Tibial artery (tissue), 4 donors: ENCODE measurements at regions of chr6 and their contacts with region 1.

Region 1: DNA sequence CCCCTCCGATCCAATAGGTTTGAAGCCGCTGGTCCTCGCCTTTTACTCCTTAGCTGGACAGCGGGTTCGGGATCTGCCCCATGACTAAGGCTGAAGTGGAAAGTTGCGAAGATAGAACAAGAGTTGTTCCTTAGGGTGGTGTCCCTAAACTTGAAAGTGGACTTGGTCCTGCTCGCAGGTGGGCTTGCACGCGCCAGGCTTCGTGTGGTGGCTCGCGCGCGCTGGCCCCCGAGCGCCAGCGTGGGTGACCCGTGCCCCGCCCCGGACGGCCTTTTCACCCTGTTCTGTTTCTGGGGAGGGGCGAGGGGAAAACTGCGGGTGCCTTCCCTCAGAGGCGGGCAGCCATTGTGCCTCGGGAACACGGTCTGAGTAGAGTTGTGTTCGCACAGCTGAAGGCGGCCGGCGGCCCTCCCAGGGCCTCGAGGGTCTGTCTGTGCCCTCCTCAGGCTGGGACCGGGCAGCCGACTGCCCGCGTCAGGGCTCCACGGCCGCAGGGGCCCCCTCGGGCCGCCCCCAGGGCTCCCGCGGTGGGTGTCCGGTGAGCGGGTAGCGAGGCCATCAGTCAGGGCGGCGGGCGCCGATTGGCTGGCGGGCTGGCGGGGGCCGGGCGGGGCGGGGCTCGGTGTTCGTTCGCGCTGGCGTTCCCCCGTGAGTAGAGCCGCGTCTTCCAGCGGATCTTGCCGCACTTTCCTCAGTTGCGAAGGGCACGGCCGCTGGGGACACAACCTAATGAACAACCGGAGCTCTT is 33.0 kb downstream of the RREB1 start:
- DNase-seq: peak; percentile 90 to 95
- H3K4me3 ChIP-seq: peak overlapping the region; percentile 65 to 66
- H3K27ac ChIP-seq: peak overlapping the region; percentile 92 to 97
- H3K4me1 ChIP-seq: peaks cover 0 to 45% (median 25%) of the 10 kb centered on the region in 4 donors
- H3K27me3 ChIP-seq: no peaks in the 10 kb centered on the region
- CTCF ChIP-seq: no peak

Region 2: DNA sequence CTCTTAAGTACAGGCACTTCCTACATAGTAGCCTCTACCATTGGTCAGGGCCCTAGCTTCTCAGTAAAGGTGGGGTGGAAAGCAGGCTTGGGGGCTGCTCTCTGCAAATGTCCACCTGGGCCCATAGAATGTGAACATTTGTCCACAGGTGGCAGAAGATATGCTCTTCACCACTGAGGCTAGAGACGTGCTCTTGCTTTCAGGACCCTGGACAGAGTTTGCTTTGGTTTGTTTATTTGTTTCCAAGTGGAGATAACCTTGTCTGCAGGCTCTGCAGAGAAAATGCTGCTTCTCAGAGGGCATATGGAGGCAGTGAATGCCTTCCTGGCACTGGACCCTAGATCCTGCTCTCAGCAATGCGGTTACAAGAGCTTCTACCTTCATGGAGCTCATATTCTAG is 949.3 kb before region 1 on chr6:
- intact Hi-C with region 1: no loop called
- DNase-seq: no peak
- H3K4me3 ChIP-seq: no peak overlapping the region
- H3K27ac ChIP-seq: no peak overlapping the region
- H3K4me1 ChIP-seq: no peaks in the 10 kb centered on the region
- H3K27me3 ChIP-seq: no peaks in the 10 kb centered on the region
- CTCF ChIP-seq: no peak

Region 3: DNA sequence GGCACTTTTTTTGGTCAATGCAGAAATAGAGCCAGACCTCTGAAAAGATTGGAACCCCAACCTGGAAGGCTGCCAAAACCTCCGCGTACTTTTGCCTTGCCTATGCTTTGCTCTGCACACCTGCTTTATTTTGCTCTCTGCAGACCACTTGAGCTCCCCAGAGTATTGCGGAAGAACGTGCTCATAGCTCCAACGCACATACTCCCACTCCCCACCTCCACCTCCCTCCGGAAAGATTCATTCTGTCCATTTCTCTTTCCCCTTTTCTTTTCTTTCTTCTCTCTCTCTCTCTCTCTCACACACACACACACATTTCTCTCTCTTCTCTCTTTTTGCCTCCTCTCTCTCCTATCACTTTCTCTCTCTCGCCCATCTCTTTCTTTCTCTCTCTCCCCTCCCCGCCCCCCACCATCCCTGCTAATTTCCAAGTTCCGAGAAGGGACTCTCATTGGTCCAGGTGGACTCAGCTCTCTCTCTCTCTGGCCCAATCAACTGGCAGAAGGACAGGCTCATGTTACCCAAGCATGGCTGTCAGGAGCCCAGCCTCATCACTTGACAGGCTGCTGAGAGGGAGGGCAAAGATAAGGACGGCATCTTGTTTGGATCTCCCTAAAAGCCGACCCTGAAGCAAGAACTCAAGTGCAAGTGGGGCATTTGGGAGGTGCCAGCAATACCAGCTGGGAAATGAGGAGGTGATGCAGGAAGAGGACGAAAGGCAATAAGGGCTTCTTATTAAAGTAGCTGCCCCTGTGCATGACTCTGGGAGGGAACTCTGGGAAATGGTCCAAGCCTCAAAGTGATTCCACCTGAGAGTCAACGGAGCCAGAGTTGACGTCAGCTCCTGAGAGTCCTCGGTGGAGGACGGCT is 306.2 kb before region 1 on chr6:
- intact Hi-C with region 1: loop called (anchors 5 kb)
- DNase-seq: no peak
- H3K4me3 ChIP-seq: no peak overlapping the region
- H3K27ac ChIP-seq: no peak overlapping the region
- H3K4me1 ChIP-seq: no peaks in the 10 kb centered on the region
- H3K27me3 ChIP-seq: peaks cover 0 to 5% of the 10 kb centered on the region in 2 donors
- CTCF ChIP-seq: no peak

Region 4: GRCh38 chr6:7107578-7108195 is 33.1 kb before region 1 on chr6 and contains the start of gene RREB1:
- intact Hi-C with region 1: loop called (anchors 2 kb)
- DNase-seq: peak; percentile 79 to 86
- H3K4me3 ChIP-seq: peak within 1 kb of the TSS; percentile 78 to 90
- H3K27ac ChIP-seq: peak within 1 kb of the TSS; percentile 90 to 96
- H3K4me1 ChIP-seq: peaks cover 0 to 31% (median 17%) of the 10 kb centered on the region in 4 donors
- H3K27me3 ChIP-seq: no peaks in the 10 kb centered on the region
- CTCF ChIP-seq: no peak

Region 5: DNA sequence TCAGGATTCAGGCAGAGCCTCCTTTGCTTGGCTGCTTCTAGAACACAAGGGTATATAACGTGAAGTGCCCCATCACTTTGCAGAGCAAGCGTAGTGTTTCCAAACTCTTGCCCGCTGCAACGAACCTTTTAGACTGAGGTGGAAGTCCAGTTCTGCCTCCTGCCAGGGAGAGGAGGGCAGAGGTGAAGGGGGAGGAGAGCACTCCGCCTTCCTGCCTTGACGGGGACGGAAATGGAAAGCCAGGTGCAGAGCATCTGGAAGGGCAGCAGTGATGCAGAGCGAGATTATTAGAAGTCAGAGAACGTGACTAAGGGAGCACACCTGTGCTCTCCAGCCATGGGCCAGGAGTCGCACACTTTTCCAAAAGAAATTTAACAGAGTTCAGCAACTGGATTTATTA is 30.3 kb after region 1 on chr6:
- intact Hi-C with region 1: loop called (anchors 2 kb)
- DNase-seq: no peak
- H3K4me3 ChIP-seq: no peak overlapping the region
- H3K27ac ChIP-seq: peak overlapping the region; percentile 62 to 74
- H3K4me1 ChIP-seq: peaks cover 0 to 84% (median 60%) of the 10 kb centered on the region in 4 donors
- H3K27me3 ChIP-seq: no peaks in the 10 kb centered on the region
- CTCF ChIP-seq: no peak

Region 6: DNA sequence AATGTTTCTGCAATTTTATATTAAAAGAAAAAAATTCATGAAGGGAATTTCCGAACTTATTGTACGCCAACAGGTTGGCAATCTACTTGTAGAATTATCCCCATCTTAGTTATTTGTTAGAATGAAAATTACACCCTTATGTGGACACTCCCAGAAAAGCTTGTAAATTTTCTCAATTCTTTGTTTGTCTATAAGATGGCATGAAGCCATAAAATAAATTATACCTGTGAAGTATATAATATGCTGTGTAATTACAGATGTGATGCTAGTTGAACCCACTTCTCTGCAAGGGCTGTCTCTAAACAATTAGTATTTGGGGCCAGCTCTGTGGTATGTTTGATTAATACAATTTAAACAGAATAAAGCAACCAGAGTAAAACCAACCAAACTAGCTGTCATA is 348.6 kb after region 1 on chr6:
- intact Hi-C with region 1: no loop called
- DNase-seq: no peak
- H3K4me3 ChIP-seq: no peak overlapping the region
- H3K27ac ChIP-seq: no peak overlapping the region
- H3K4me1 ChIP-seq: no peaks in the 10 kb centered on the region
- H3K27me3 ChIP-seq: no peaks in the 10 kb centered on the region
- CTCF ChIP-seq: no peak

Region 7: DNA sequence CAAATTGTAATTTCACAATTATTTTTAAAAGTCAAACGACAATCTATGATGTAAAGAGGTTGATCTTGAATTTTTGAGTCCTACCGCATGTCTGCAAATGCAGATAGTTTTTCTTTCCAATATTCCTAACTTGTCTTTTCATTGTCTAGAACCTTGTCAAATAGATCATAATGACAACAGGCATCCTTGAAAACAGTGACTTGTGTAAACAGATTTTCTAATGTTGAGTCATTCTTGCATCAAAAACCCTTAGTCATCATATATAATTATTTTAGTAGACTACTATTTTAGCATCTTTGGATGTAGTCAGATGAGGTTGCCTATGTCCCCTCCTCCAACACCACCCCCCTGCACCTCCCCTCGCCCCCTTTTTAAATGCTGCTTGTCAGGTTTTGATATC is 628.9 kb after region 1 on chr6:
- intact Hi-C with region 1: no loop called
- DNase-seq: no peak
- H3K4me3 ChIP-seq: no peak overlapping the region
- H3K27ac ChIP-seq: no peak overlapping the region
- H3K4me1 ChIP-seq: no peaks in the 10 kb centered on the region
- H3K27me3 ChIP-seq: no peaks in the 10 kb centered on the region
- CTCF ChIP-seq: no peak